Activated CD4-positive, alpha-beta T cell treated with anti-CD3 and anti-CD28 coated beads for 36 hours (primary cell): ENCODE measurements at regions of chr10 and their contacts with region 1.

Region 1: GRCh38 chr10:68526626-68527307 is 556 bp downstream of the SLC25A16 start:
- DNase-seq: no peak
- ATAC-seq: peak; percentile 16
- H3K4me3 Mint-ChIP-seq: peak overlapping the region; percentile 93
- H3K27ac Mint-ChIP-seq: peak overlapping the region; percentile 88
- H3K4me1 Mint-ChIP-seq: peaks cover 9% of the 10 kb centered on the region
- H3K27me3 Mint-ChIP-seq: no peaks in the 10 kb centered on the region

Region 2: GRCh38 chr10:68406815-68407548 is 119.8 kb before region 1 on chr10 and contains the start of gene RUFY2:
- CTCF ChIA-PET with region 1: no interaction called
- POLR2A ChIA-PET with region 1: no interaction called
- intact Hi-C with region 1: loop called in 1 of 2 experiments (anchors 1 kb)
- DNase-seq: peak; percentile 86
- ATAC-seq: peak; percentile 95
- H3K4me3 Mint-ChIP-seq: peak within 1 kb of the TSS; percentile 83
- H3K27ac Mint-ChIP-seq: peak within 1 kb of the TSS; percentile 76
- H3K4me1 Mint-ChIP-seq: peaks cover 19% of the 10 kb centered on the region
- H3K27me3 Mint-ChIP-seq: no peaks in the 10 kb centered on the region
- total RNA-seq, gene RUFY2: 9.1 to 9.5 TPM

Region 3: GRCh38 chr10:68720793-68721672 is 194.3 kb after region 1 on chr10 and contains the start of gene CCAR1:
- CTCF ChIA-PET with region 1: no interaction called
- POLR2A ChIA-PET with region 1: interaction called, 3 read pairs
- intact Hi-C with region 1: loop called (anchors 1 kb)
- DNase-seq: peak; percentile 98
- ATAC-seq: peak; percentile 100
- H3K4me3 Mint-ChIP-seq: peak within 1 kb of the TSS; percentile 91
- H3K27ac Mint-ChIP-seq: peak within 1 kb of the TSS; percentile 96
- H3K4me1 Mint-ChIP-seq: peaks cover 9% of the 10 kb centered on the region
- H3K27me3 Mint-ChIP-seq: no peaks in the 10 kb centered on the region
- total RNA-seq, gene CCAR1: 89.5 to 125 TPM

Region 4: GRCh38 chr10:68955832-68956532 is 429.2 kb after region 1 on chr10 and contains the start of gene DDX21:
- CTCF ChIA-PET with region 1: no interaction called
- POLR2A ChIA-PET with region 1: no interaction called
- intact Hi-C with region 1: loop called in 1 of 2 experiments (anchors 2 kb)
- DNase-seq: peak; percentile 94
- ATAC-seq: peak; percentile 85
- H3K4me3 Mint-ChIP-seq: peak within 1 kb of the TSS; percentile 98
- H3K27ac Mint-ChIP-seq: peak within 1 kb of the TSS; percentile 100
- H3K4me1 Mint-ChIP-seq: peaks cover 35% of the 10 kb centered on the region
- H3K27me3 Mint-ChIP-seq: no peaks in the 10 kb centered on the region
- total RNA-seq, gene DDX21: 187 to 192 TPM